T-cell (primary cell): ENCODE measurements at regions of chr6 and their contacts with region 1.

Region 1: GRCh38 chr6:26003102-26003694 is 40.6 kb downstream of the TRIM38 start:
- DNase-seq: peak in 26 of 35 experiments; percentile 11 to 69 (median 34)
- ATAC-seq: peak in 2 of 4 experiments; percentile 30 to 55
- H3K4me3 ChIP-seq: no peak overlapping the region
- H3K4me3 Mint-ChIP-seq: no peak overlapping the region
- H3K27ac ChIP-seq: no peak overlapping the region
- H3K27ac Mint-ChIP-seq: no peak overlapping the region
- H3K4me1 ChIP-seq: peaks cover 0 to 6% of the 10 kb centered on the region in 2 experiments
- H3K4me1 Mint-ChIP-seq: peaks cover 4 to 7% (median 6%) of the 10 kb centered on the region in 3 donors
- H3K27me3 ChIP-seq: no peaks in the 10 kb centered on the region
- H3K27me3 Mint-ChIP-seq: no peaks in the 10 kb centered on the region

Region 2: GRCh38 chr6:25788305-25788922 is 214.8 kb before region 1 on chr6:
- CTCF ChIA-PET with region 1: interaction called, 8 to 10 read pairs
- POLR2A ChIA-PET with region 1: no interaction called
- DNase-seq: peak in 29 of 35 experiments; percentile 4 to 63 (median 23)
- ATAC-seq: peak in 3 of 4 experiments; percentile 23 to 52 (median 47)
- H3K4me3 ChIP-seq: no peak overlapping the region
- H3K4me3 Mint-ChIP-seq: no peak overlapping the region
- H3K27ac ChIP-seq: no peak overlapping the region
- H3K27ac Mint-ChIP-seq: no peak overlapping the region
- H3K4me1 ChIP-seq: no peaks in the 10 kb centered on the region
- H3K4me1 Mint-ChIP-seq: peaks cover 0 to 4% (median 0%) of the 10 kb centered on the region in 3 donors
- H3K27me3 ChIP-seq: peaks cover 0 to 3% of the 10 kb centered on the region in 2 experiments
- H3K27me3 Mint-ChIP-seq: peaks cover 0 to under 1% of the 10 kb centered on the region in 2 donors

Region 3: GRCh38 chr6:25992413-25993037 is 10.7 kb before region 1 on chr6:
- CTCF ChIA-PET with region 1: interaction called, 18 to 29 read pairs
- POLR2A ChIA-PET with region 1: no interaction called
- DNase-seq: peak; percentile 77 to 96 (median 89)
- ATAC-seq: peak; percentile 94 to 98 (median 96)
- H3K4me3 ChIP-seq: peak overlapping the region; percentile 70 to 89
- H3K4me3 Mint-ChIP-seq: peak overlapping the region; percentile 91 to 95 (median 94)
- H3K27ac ChIP-seq: peak overlapping the region; percentile 77
- H3K27ac Mint-ChIP-seq: peak overlapping the region; percentile 92 to 94
- H3K4me1 ChIP-seq: peaks cover 9 to 17% of the 10 kb centered on the region in 2 experiments
- H3K4me1 Mint-ChIP-seq: peaks cover 21 to 36% (median 27%) of the 10 kb centered on the region in 3 donors
- H3K27me3 ChIP-seq: no peaks in the 10 kb centered on the region
- H3K27me3 Mint-ChIP-seq: no peaks in the 10 kb centered on the region

Region 4: DNA sequence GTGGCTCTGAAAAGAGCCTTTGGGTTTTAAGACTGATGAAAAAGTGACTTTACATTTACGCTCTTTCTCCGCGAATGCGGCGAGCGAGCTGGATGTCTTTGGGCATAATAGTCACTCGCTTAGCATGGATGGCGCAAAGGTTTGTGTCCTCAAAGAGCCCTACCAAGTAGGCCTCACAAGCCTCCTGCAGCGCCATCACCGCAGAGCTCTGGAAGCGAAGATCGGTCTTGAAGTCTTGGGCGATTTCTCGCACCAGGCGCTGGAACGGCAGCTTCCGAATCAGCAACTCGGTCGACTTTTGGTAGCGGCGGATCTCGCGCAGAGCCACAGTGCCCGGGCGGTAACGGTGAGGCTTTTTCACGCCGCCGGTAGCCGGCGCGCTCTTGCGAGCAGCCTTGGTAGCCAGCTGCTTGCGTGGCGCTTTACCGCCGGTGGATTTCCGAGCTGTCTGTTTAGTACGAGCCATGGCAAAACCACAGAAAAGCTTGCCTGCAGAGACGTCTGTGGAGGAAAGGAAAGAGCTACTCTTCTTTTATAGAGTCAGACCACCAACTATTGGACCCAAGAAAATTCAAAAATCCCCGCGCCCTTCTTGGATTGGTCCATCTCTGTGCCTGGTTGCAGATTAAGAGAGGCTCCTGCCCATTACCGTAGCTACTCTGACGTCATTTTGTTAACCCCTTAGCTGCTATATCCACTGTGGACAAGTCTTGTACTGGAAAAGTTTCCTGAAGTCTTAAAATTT is 28.6 kb after region 1 on chr6:
- CTCF ChIA-PET with region 1: interaction called, 5 to 16 read pairs
- POLR2A ChIA-PET with region 1: interaction called in 1 of 2 experiments, 3 read pairs
- DNase-seq: peak; percentile 61 to 95 (median 87)
- ATAC-seq: peak; percentile 68 to 72 (median 70)
- H3K4me3 ChIP-seq: peak overlapping the region; percentile 61 to 84
- H3K4me3 Mint-ChIP-seq: peak overlapping the region; percentile 90 to 95 (median 92)
- H3K27ac ChIP-seq: peak overlapping the region; percentile 74
- H3K27ac Mint-ChIP-seq: peak overlapping the region; percentile 94 to 98
- H3K4me1 ChIP-seq: peaks cover 30 to 32% of the 10 kb centered on the region in 2 experiments
- H3K4me1 Mint-ChIP-seq: peaks cover 48 to 53% (median 50%) of the 10 kb centered on the region in 3 donors
- H3K27me3 ChIP-seq: no peaks in the 10 kb centered on the region
- H3K27me3 Mint-ChIP-seq: peaks cover 0 to 2% of the 10 kb centered on the region in 2 donors